ENCODE measurements at regions of chr7 and their contacts with region 1.

Region 1: DNA sequence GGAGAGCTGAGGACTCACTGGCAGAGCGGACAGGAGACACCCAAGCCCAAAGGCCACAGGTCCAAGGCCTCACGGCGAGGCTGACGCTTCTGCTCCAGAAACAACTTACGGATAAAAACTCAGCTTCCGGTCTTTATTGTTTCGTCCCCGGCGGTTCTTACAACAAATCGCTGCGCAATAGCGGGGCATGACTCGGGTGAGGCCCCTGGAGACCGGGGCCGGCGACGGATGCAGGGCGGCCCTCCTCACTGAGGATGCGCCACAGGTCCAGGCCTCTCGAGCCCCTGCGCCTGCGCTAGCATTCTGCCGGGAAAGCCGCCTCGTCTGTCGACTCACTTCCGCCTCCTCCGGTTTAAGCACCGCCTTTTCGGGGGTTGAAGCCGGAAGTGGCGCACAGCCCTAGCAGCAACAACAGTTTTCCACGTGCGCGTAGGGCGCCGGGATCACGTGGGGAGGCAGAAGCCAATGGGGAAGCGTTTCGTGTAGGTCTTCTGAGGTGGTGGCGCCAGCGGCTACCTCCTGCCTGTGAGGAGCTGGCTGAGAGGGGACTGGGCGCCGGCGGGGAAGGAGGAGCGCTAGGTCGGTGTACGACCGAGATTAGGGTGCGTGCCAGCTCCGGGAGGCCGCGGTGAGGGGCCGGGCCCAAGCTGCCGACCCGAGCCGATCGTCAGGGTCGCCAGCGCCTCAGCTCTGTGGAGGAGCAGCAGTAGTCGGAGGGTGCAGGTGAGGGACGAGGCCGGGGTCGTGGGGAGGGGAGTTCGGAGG is at the starts of genes DNAJB9 and THAP5:
- DNase-seq: peak; percentile 99 to 100 (median 100)
- H3K4me3 ChIP-seq: peak within 1 kb of the TSS; percentile 61 to 99 (median 91)
- H3K27ac ChIP-seq: peak within 1 kb of the TSS; percentile 71 to 99 (median 93)
- H3K27me3 ChIP-seq: no peaks in the 10 kb centered on the region
- CTCF ChIP-seq: peak in 41 of 56 donors; percentile 2 to 64 (median 31)
- total RNA-seq, gene DNAJB9: 12.5 to 39.5 (median 27.0) TPM
- total RNA-seq, gene THAP5: 31.7 to 60.9 (median 43.0) TPM

Region 2: GRCh38 chr7:108525985-108526767 is 43.4 kb before region 1 on chr7 and contains the start of gene PNPLA8:
- intact Hi-C with region 1: loop called (anchors 1 kb)
- DNase-seq: peak; percentile 100
- H3K4me3 ChIP-seq: peak within 1 kb of the TSS; percentile 64 to 96 (median 82)
- H3K27ac ChIP-seq: peak within 1 kb of the TSS; percentile 51 to 100 (median 96)
- H3K27me3 ChIP-seq: no peaks in the 10 kb centered on the region
- CTCF ChIP-seq: peak in 19 of 56 donors; percentile 6 to 49 (median 23)
- total RNA-seq, gene PNPLA8: 36.9 to 84.0 (median 53.9) TPM

Measured in dorsolateral prefrontal cortex (tissue), 120 donors.